Activated CD4-positive, alpha-beta T cell treated with anti-CD3 and anti-CD28 coated beads, Interleukin-2, amount 10 ng/mL, durations not matched to agents 24 days and 14 days (primary cell): ENCODE measurements at regions of chr5 and their contacts with region 1.

Region 1: GRCh38 chr5:93582677-93583438 is at the start of gene NR2F1:
- DNase-seq: no peak
- H3K4me3 Mint-ChIP-seq: no peak within 1 kb of the TSS
- H3K27ac Mint-ChIP-seq: no peak within 1 kb of the TSS
- H3K4me1 Mint-ChIP-seq: peaks cover 18% of the 10 kb centered on the region
- H3K27me3 Mint-ChIP-seq: peaks cover 45% of the 10 kb centered on the region
- total RNA-seq, gene NR2F1: not detected in 2 replicates

Region 2: GRCh38 chr5:93570294-93571113 is 12.4 kb before region 1 on chr5:
- intact Hi-C with region 1: loop called (anchors 1 kb)
- DNase-seq: peak; percentile 60
- H3K4me3 Mint-ChIP-seq: no peak overlapping the region
- H3K27ac Mint-ChIP-seq: no peak overlapping the region
- H3K4me1 Mint-ChIP-seq: peaks cover 3% of the 10 kb centered on the region
- H3K27me3 Mint-ChIP-seq: peaks cover 71% of the 10 kb centered on the region

Region 3: GRCh38 chr5:93635991-93636390 is 53.1 kb after region 1 on chr5:
- intact Hi-C with region 1: no loop called
- DNase-seq: no peak
- H3K4me3 Mint-ChIP-seq: no peak overlapping the region
- H3K27ac Mint-ChIP-seq: no peak overlapping the region
- H3K4me1 Mint-ChIP-seq: no peaks in the 10 kb centered on the region
- H3K27me3 Mint-ChIP-seq: no peaks in the 10 kb centered on the region

Region 4: GRCh38 chr5:93800988-93801811 is 218.3 kb after region 1 on chr5:
- intact Hi-C with region 1: loop called (anchors 1 kb)
- DNase-seq: peak; percentile 75
- H3K4me3 Mint-ChIP-seq: no peak overlapping the region
- H3K27ac Mint-ChIP-seq: no peak overlapping the region
- H3K4me1 Mint-ChIP-seq: peaks cover 3% of the 10 kb centered on the region
- H3K27me3 Mint-ChIP-seq: no peaks in the 10 kb centered on the region

Region 5: GRCh38 chr5:93909356-93909755 is 326.5 kb after region 1 on chr5:
- intact Hi-C with region 1: loop called (anchors 1 kb)
- DNase-seq: no peak
- H3K4me3 Mint-ChIP-seq: no peak overlapping the region
- H3K27ac Mint-ChIP-seq: no peak overlapping the region
- H3K4me1 Mint-ChIP-seq: no peaks in the 10 kb centered on the region
- H3K27me3 Mint-ChIP-seq: no peaks in the 10 kb centered on the region

Region 6: DNA sequence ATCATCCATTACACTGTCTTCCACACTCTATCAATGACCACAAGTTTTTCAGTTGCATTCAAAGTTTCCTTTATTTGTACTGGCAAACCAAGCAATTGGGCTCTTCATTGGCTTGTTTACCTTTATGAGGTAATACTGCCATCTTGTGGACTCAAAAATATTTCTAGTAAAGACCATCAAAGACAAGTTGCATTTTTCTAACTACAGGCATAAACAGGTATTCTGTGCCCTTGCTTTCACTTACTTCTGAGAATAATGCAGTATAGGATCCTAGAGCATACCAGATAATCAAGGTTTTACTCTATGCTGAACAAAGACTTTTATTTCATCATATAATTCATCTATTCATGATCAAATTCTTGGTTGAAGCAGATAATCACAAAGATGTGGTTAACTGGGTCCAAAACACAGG is 332.3 kb after region 1 on chr5:
- intact Hi-C with region 1: loop called (anchors 2 kb)
- DNase-seq: no peak
- H3K4me3 Mint-ChIP-seq: no peak overlapping the region
- H3K27ac Mint-ChIP-seq: no peak overlapping the region
- H3K4me1 Mint-ChIP-seq: no peaks in the 10 kb centered on the region
- H3K27me3 Mint-ChIP-seq: no peaks in the 10 kb centered on the region